GM10248 (cell line): ENCODE measurements at regions of chr20 and their contacts with region 1.

Region 1: GRCh38 chr20:36074983-36075382 is 79.6 kb upstream of the EPB41L1 start:
- DNase-seq: no peak
- CTCF ChIP-seq: no peak

Region 2: DNA sequence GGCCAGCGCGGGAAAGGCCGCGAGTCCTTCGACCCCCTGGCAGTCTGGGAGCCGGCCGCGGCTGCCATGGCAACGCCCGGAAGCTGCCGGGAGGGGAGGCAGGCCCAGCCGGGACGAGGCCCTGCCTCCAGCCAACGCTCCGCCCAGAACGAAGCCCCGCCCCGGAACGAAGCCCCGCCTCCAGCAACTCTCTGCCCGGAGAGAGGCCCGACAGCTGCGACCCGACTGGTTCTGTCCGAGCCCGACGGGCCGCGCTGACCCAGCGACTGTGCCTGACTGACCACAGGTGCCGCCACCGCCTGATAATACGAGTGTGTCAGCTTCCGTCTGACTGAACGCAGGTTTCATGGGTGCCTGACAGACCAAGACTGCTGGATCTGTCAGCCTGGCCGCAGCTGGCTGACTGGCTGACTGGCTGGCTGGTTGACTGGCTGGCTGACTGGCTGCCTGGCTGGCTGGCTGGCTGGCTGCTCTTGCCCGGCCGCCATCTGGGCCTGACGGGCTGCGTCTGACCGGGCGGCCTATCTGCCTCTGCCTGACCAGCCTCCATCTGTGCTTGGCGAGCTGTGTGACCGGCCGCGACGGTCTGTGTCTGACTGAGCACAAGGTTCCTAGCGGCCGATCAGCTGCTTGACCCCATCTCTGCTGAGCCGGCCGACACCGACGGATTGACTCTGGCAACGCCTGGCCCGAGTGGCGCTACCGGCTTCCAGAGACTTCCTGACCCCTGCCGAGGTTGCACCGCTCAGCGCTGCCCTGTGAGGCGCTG is 10.1 kb before region 1 on chr20:
- CTCF ChIA-PET with region 1: interaction called, 16 read pairs
- POLR2A ChIA-PET with region 1: no interaction called
- DNase-seq: peak; percentile 99
- CTCF ChIP-seq: no peak